ENCODE measurements at regions of chr6 and their contacts with region 1.

Region 1: DNA sequence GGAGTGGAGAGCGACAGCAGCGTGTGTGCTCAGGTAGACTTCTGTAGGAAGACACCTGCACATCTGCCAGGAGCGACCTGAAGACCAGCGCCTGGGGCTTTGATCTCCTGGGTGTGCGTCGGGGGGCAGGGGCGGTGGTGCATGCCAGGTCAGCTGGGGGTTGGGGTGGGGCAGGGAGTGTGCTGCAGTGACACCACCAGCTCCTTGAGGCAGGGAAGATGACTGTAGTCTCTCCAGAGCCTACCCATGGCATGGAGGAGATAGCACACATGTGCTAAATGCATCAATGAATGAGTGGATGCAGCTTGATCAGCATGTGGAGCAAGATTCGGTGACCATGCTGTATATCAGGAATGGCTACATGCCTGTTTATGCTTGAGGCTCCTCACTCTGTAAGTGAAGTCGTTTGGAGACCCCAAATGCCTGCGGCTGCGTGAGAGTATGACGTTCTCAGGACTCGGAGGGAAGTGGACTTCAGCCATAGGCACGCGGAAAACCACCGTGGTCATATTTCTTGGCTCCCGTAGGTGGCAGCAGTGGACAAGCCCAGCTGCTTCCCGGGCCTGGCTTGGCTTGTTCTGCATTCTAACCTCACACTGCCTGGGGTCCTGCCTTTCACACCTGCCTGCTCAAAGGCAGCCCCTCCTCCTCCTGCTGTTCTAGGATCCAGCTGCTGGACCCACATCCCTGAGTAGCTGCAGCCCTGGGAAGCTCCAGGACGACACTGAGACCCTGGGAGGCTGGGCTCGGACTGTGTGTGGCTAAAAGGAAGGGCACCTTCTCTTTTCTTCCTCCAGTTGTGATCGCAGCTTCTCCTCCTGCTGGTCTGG is 39.4 kb upstream of the KCNK16 start:
- DNase-seq: peak; percentile 67
- H3K4me3 ChIP-seq: no peak overlapping the region
- H3K27ac ChIP-seq: no peak overlapping the region
- H3K4me1 ChIP-seq: no peaks in the 10 kb centered on the region
- H3K27me3 ChIP-seq: no peaks in the 10 kb centered on the region
- CTCF ChIP-seq: peak; percentile 67 to 84 (median 77)
- EP300 ChIP-seq: no peak
- POLR2A ChIP-seq: no peak

Region 2: GRCh38 chr6:39124114-39124513 is 237.8 kb before region 1 on chr6:
- in situ Hi-C with region 1: no loop called
- intact Hi-C with region 1: no loop called
- DNase-seq: no peak
- H3K4me3 ChIP-seq: no peak overlapping the region
- H3K27ac ChIP-seq: no peak overlapping the region
- H3K4me1 ChIP-seq: no peaks in the 10 kb centered on the region
- H3K27me3 ChIP-seq: peaks cover 4% of the 10 kb centered on the region
- CTCF ChIP-seq: no peak
- EP300 ChIP-seq: no peak
- POLR2A ChIP-seq: no peak

Region 3: DNA sequence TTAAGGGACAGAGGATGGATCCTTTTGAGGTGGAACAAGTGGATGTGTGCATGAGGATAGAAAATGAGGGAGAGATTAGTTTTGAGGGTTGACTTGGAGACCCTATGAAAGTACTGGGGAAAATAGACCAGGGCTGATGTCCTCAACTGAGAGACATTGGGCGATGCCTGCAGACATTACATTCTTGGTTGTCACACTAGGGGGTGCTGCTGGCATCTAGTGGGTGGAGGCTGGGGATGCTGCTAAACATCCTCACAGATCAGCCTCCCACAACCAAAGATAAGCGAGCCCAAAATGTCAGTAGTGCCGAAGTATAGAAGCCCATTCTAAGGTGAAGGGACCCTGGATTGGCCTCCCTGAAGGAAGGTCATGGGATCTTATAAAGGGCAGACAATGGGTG is 509.1 kb after region 1 on chr6:
- in situ Hi-C with region 1: loop called in 1 of 4 experiments (anchors 25 kb)
- intact Hi-C with region 1: loop called (anchors 10 kb)
- DNase-seq: no peak
- H3K4me3 ChIP-seq: no peak overlapping the region
- H3K27ac ChIP-seq: no peak overlapping the region
- H3K4me1 ChIP-seq: no peaks in the 10 kb centered on the region
- H3K27me3 ChIP-seq: no peaks in the 10 kb centered on the region
- CTCF ChIP-seq: no peak
- EP300 ChIP-seq: no peak
- POLR2A ChIP-seq: no peak

Region 4: DNA sequence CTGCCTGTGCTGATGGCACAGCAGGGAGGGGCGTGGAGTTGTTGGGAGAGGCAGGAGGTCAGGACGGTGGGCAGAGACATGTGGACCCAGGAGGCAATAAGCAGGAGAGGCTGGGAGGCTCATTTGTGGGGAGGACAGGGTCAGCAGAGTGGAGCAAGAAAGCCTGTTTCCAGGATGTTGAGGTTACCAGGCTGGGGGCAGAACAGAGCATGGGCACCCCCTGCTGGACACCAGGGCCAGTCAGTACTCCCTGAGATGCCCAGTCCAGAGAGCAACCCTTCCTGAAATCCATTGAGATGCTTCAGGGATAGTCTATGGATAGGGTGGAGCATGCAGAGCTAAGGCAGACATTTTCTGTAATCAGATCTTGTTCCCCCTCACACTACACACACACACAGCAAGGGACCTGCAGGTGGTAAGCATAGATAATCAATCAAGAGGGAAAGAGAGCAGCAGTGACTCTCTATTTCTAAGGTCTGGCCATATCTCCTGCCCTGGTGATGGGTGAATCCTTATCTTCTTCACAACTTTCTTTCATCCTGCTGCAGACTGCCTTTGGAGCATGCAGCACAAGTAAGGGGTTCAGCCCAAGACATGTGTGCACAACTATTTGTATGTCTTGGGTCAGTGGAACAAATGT is 530.7 kb after region 1 on chr6:
- in situ Hi-C with region 1: loop called in 1 of 4 experiments (anchors 25 kb)
- intact Hi-C with region 1: no loop called
- DNase-seq: peak; percentile 66
- H3K4me3 ChIP-seq: no peak overlapping the region
- H3K27ac ChIP-seq: no peak overlapping the region
- H3K4me1 ChIP-seq: peaks cover 0 to 10% (median 2%) of the 10 kb centered on the region in 4 donors
- H3K27me3 ChIP-seq: no peaks in the 10 kb centered on the region
- CTCF ChIP-seq: peak; percentile 51 to 69 (median 65)
- EP300 ChIP-seq: no peak
- POLR2A ChIP-seq: no peak

Region 5: DNA sequence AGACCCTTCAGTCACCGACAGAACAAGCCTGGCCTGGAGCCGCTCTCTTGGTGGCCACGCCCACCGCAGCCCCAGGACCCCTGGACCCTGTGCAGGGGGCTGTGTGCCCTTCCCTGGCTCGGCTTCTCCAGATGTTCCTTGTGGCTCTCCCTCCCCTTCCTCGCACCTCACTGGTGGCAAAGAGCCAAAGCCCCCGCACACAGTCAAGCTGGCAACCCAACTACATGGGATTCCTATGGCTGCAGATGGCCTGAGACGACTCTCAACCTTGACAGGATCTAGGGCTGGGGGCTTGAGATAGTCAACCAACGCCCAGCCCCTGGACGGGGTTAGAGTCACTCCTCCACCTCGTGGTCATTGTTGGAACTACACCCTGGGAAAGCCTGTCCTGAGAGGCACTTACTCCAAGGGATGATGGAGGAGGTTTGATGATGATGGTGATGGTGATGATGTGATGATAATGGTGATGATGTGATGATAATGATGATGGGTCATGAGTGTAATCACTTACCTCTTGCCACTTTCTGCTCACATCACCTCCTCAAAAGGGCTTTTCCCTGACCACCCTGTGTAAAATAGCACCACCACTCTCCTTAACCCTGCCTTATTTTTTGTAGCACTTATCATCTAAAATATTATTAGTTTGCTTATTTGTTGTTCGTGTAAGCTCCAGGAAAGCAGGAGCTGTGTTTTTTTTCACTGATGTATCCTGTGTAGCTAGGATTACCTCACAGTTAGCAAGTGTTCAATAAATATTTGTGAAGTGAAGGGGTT is 946.8 kb after region 1 on chr6:
- in situ Hi-C with region 1: loop called (anchors 25 kb)
- intact Hi-C with region 1: no loop called
- DNase-seq: peak; percentile 64
- H3K4me3 ChIP-seq: no peak overlapping the region
- H3K27ac ChIP-seq: no peak overlapping the region
- H3K4me1 ChIP-seq: peaks cover 0 to 4% (median 0%) of the 10 kb centered on the region in 4 donors
- H3K27me3 ChIP-seq: peaks cover 17% of the 10 kb centered on the region
- CTCF ChIP-seq: peak; percentile 90 to 95 (median 92)
- EP300 ChIP-seq: no peak
- POLR2A ChIP-seq: no peak

Region 6: GRCh38 chr6:40563111-40563510 is 1201.2 kb after region 1 on chr6:
- in situ Hi-C with region 1: no loop called
- intact Hi-C with region 1: no loop called
- DNase-seq: no peak
- H3K4me3 ChIP-seq: no peak overlapping the region
- H3K27ac ChIP-seq: no peak overlapping the region
- H3K4me1 ChIP-seq: no peaks in the 10 kb centered on the region
- H3K27me3 ChIP-seq: no peaks in the 10 kb centered on the region
- CTCF ChIP-seq: no peak
- EP300 ChIP-seq: no peak
- POLR2A ChIP-seq: no peak

Region 7: GRCh38 chr6:40845553-40845952 is 1483.7 kb after region 1 on chr6:
- in situ Hi-C with region 1: loop called in 1 of 4 experiments (anchors 25 kb)
- intact Hi-C with region 1: no loop called
- DNase-seq: peak; percentile 12
- H3K4me3 ChIP-seq: no peak overlapping the region
- H3K27ac ChIP-seq: no peak overlapping the region
- H3K4me1 ChIP-seq: no peaks in the 10 kb centered on the region
- H3K27me3 ChIP-seq: peaks cover 9% of the 10 kb centered on the region
- CTCF ChIP-seq: peak in 4 of 5 experiments; percentile 20 to 40 (median 32)
- EP300 ChIP-seq: no peak
- POLR2A ChIP-seq: no peak

Region 8: DNA sequence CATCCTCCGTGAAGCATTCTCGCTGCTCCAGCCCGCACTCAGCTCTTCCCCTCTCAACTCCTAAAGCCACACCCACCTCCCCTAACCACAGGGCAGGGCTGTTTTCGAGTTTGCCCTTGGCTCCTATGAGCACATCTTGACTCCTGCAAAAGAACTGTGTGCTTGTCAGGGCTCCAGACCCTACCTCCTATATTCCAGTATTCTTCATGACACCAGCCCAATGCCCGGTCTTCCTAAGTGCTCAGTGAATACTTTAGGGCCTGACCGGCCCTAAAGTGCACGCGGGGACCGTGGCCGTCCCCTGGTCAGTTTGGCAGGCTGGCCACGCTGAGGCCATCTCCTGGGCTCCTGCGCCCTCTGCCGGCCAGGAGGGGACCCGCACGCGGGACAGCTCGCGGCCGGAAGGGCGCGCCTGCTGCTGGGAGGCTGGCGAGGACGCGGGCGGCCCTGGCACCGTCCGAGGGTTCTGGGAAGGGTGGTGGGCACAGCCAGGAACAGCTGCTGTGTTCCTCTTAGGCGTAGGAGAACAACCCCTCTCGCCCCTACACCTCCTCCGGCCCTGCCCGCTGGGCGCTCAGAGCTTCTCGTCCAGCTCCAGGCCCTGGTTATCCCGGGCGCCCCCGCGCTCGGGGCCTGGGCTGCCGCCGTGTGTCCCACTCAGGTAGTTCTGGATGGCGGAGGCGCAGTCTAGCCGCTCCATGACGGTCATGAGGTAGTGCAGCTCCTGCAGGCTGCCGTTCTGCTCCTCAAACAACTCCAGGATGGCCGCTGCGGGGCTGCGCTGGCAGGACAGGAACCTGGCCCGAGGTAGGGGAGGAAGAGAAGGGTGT is 1666.1 kb after region 1 on chr6:
- in situ Hi-C with region 1: loop called in 2 of 4 experiments (anchors 25 kb)
- intact Hi-C with region 1: no loop called
- DNase-seq: peak; percentile 88
- H3K4me3 ChIP-seq: peak overlapping the region; percentile 0 to 52 (median 40)
- H3K27ac ChIP-seq: peak overlapping the region; percentile 9 to 73 (median 70)
- H3K4me1 ChIP-seq: peaks cover 9 to 20% (median 12%) of the 10 kb centered on the region in 4 donors
- H3K27me3 ChIP-seq: no peaks in the 10 kb centered on the region
- CTCF ChIP-seq: peak; percentile 97 to 99 (median 99)
- EP300 ChIP-seq: no peak
- POLR2A ChIP-seq: peak; percentile 26